Transverse colon (tissue), 4 donors: ENCODE measurements at regions of chr7 and their contacts with region 1.

Region 1: GRCh38 chr7:74449809-74450397 is 3.8 kb upstream of the GTF2IRD1 start:
- DNase-seq: peak; percentile 66
- H3K4me3 ChIP-seq: no peak overlapping the region
- H3K27ac ChIP-seq: no peak overlapping the region
- H3K4me1 ChIP-seq: peaks cover 15 to 25% (median 23%) of the 10 kb centered on the region in 4 donors
- H3K27me3 ChIP-seq: no peaks in the 10 kb centered on the region
- CTCF ChIP-seq: peak; percentile 81 to 90 (median 87)
- EP300 ChIP-seq: no peak
- POLR2A ChIP-seq: no peak

Region 2: GRCh38 chr7:74502181-74502891 is 52.4 kb after region 1 on chr7:
- in situ Hi-C with region 1: loop called in 1 of 4 experiments (anchors 10 kb)
- intact Hi-C with region 1: loop called (anchors 10 kb)
- DNase-seq: peak; percentile 32
- H3K4me3 ChIP-seq: no peak overlapping the region
- H3K27ac ChIP-seq: peak overlapping the region; percentile 25 to 55 (median 52)
- H3K4me1 ChIP-seq: peaks cover 0 to 11% (median 4%) of the 10 kb centered on the region in 4 donors
- H3K27me3 ChIP-seq: no peaks in the 10 kb centered on the region
- CTCF ChIP-seq: no peak
- EP300 ChIP-seq: no peak
- POLR2A ChIP-seq: no peak

Region 3: DNA sequence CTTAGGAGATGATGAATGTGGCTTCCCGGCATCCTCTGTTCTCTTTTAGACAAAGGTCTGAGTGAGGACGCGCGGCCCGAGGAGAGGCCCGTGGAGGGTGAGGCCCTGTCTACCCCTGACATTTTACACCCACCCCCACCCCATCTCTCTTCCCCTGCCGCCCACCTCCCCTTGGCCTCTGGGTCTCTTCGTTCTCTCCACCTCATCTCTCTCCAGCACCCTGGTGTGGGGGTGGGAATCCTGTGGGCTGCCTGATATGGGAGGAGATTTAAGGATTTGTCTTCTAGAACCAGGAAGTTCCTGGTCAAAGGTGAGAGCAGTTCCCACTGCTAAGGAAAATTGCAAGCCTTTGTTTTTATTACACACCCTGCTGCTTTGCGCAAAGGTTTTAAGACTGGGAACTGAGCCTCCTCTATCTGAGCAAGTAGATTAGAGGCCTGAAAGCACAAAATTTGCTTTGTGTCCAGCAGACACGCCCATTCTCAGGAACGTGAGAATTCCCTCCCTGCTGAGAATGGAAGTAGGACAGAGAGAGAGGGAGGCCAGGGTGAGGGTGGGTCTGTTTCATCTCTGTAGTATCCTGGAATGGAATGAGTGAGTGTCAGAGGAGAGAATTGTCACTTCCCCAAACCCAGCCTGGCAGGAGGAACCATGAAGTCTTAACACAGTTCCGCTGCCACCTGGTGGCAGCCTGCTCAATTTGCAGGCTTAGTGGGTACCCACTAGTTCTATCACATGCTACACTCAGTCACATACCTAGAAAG is 95.0 kb after region 1 on chr7:
- in situ Hi-C with region 1: loop called in 2 of 4 experiments (anchors 10 to 25 kb)
- intact Hi-C with region 1: no loop called
- DNase-seq: peak; percentile 65
- H3K4me3 ChIP-seq: no peak overlapping the region
- H3K27ac ChIP-seq: peak overlapping the region; percentile 40 to 77 (median 65)
- H3K4me1 ChIP-seq: peaks cover 0 to 13% (median 5%) of the 10 kb centered on the region in 4 donors
- H3K27me3 ChIP-seq: no peaks in the 10 kb centered on the region
- CTCF ChIP-seq: peak; percentile 48 to 86 (median 56)
- EP300 ChIP-seq: no peak
- POLR2A ChIP-seq: no peak

Region 4: DNA sequence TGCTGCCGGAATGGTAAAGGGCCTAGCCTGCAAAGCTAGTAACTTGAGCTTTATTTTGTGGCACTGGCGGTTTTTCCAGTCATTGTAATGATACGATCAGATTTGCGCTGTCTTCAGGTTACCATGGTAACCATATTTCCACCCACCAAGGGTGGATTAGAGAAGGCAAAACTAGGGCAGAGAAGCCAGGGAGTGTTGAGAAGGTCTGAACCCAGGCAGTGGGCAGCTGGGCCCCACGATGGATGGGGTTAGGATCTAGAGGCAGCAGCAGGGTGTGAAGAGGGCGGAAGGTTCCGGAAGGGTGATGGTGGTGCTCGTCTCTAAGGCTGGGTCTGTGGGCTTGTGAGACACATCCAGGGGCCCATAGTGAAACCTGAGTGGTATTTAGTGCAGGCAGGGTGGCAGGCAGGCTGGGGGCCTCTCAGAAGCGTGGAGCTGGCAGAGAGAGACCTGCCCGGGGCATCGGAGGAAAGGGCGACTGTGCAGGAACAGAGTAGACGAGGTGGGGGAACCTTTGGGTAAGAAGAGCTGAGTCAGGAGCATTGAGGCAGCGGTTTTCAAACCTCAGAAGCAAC is 119.7 kb after region 1 on chr7:
- in situ Hi-C with region 1: loop called in 1 of 4 experiments (anchors 25 kb)
- intact Hi-C with region 1: loop called (anchors 1 kb)
- DNase-seq: no peak
- H3K4me3 ChIP-seq: no peak overlapping the region
- H3K27ac ChIP-seq: no peak overlapping the region
- H3K4me1 ChIP-seq: peaks cover 0 to 7% (median 3%) of the 10 kb centered on the region in 4 donors
- H3K27me3 ChIP-seq: no peaks in the 10 kb centered on the region
- CTCF ChIP-seq: no peak
- EP300 ChIP-seq: no peak
- POLR2A ChIP-seq: no peak

Region 5: DNA sequence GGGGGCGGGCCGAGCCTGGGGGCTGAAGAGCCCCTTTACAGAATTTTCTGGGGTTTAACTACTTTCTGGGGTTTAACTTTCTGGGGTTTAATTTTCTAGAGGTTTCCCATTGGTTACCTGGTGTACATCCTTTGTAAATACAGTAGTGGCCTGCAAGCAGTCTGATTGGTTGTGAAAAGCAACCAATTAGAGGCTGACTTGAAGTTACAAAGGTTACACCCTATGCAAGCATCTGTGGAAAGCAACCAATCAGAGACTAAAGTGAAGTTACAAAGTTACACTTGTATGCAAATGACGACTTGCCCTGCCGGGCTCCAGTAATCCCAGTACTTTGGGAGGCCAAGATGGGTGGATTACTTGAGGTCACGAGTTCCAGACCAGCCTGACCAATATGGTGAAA is 235.0 kb after region 1 on chr7:
- in situ Hi-C with region 1: loop called in 1 of 4 experiments (anchors 25 kb)
- intact Hi-C with region 1: no loop called
- DNase-seq: no peak
- H3K4me3 ChIP-seq: no peak overlapping the region
- H3K27ac ChIP-seq: no peak overlapping the region
- H3K4me1 ChIP-seq: no peaks in the 10 kb centered on the region
- H3K27me3 ChIP-seq: no peaks in the 10 kb centered on the region
- CTCF ChIP-seq: no peak
- EP300 ChIP-seq: no peak
- POLR2A ChIP-seq: no peak